ENCODE measurements at regions of chr2 and their contacts with region 1.

Region 1: DNA sequence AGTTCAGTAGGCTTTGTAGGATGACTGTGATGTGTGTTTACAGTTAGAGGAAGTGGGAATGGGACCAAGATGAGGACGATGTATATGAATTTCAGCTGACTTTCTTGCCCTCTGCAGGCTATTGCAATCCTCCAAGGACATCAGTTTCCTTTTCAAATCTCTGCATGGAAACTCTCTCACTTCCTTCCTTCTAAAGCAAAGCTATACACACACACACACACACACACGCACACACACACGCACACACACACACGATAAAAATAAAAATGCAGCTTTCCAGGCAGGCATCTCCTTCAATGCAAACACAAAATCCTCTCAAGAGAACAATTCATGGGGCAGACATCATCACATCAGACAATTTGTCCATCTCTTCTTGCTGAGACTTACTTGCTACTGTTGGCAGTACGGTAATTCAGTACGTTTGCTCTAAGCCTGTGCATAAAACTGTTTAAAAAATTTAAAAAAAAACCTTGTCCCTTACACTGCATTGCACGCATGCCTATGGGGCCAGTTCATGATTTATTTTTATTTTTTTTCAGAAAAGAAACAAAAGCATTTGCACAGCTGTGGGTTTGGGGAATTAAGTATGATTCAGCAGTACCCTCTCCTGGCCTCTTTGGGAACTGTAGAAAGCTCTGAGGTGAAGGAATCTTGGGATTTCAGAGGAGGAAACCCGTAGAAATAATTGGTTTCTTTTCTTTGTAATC is 27.1 kb upstream of the ICOS start:
- DNase-seq: no peak

Region 2: DNA sequence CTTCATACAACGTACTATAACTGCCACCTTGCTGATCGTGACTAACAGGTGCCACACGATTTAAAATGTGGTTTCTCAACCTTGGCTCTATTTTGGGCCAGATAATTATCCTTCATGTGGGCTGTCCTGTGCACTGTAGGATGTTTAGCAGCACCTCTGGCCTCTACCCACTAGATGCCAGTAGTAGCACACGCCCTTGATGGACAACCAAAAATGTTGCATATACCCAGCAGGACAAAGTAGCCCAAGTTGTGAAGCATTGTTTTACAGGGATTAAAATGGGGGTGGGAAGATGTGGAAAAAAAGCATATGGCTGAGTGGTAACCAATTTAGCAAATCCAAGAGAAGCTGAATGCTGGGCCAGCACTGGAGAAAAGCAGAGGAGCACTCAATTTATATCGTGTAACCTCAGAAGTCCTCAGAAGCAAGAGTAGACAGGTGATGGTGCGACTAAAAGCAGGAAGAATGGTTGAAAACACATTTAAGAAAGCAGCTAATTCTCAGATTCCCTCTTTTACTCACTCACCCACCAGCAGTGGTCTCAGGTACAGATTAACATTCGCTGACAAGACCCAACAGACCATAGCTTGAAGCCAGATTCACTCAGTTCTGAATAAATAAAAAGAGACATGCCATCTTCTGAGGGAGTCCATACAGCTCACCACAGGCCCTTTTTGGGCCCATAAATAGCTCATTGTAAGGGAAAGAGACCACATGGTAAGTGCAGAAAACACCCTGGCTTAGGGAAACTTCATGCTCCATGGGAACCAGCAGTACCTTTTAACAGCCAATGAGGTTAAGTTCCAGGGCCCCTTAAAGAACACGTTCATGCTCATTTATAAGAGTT is 424.9 kb before region 1 on chr2:
- intact Hi-C with region 1: loop called (anchors 5 kb)
- DNase-seq: no peak

Measured in cardiac septum (tissue), 1 donor.